CD4-positive, alpha-beta T cell (primary cell): ENCODE measurements at regions of chr12 and their contacts with region 1.

Region 1: DNA sequence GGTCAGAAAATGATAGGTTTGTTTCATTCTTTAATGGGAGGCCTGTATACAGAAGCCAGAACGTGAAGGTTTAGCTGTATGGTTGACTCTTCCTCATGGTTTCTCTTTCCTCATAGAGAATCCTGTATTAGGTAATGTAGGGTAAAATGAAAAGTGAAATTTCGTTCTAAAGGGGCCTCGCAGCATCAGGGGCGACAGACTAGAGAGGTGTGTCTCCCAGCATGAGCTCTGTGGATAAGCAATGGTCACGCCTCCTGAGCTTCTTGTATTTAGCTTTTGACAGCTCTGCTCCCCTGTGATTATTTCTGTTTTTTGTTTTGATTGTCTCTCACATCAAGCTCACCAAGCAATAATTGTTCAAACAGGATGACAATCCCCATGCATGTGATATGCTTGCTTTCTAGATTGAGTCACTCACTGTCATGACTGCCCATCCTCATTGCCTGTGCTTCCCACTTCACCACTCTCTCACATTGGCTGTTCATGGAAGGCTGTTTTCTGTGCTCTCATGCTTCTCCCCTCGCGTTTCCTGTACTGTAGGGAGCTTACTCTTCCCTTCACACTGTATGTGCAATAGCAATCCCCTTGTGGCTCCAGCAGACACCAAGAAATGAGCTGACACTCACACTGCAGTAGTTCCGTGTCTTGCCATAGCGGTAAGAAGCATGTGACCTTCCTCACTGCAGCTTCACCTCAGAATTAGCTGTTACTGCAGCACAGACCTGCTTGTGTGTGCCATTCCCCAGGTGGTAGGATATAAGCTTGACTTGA is 44.0 kb downstream of the RAD52 start:
- DNase-seq: peak in 3 of 14 experiments; percentile 25 to 40 (median 30)
- ATAC-seq: peak; percentile 75
- H3K4me3 ChIP-seq: no peak overlapping the region
- H3K4me3 Mint-ChIP-seq: peak overlapping the region; percentile 12
- H3K27ac ChIP-seq: no peak overlapping the region
- H3K27ac Mint-ChIP-seq: peak overlapping the region; percentile 51
- H3K4me1 ChIP-seq: no peaks in the 10 kb centered on the region
- H3K4me1 Mint-ChIP-seq: peaks cover 43% of the 10 kb centered on the region
- H3K27me3 ChIP-seq: no peaks in the 10 kb centered on the region
- H3K27me3 Mint-ChIP-seq: no peaks in the 10 kb centered on the region
- CTCF ChIP-seq: no peak

Region 2: DNA sequence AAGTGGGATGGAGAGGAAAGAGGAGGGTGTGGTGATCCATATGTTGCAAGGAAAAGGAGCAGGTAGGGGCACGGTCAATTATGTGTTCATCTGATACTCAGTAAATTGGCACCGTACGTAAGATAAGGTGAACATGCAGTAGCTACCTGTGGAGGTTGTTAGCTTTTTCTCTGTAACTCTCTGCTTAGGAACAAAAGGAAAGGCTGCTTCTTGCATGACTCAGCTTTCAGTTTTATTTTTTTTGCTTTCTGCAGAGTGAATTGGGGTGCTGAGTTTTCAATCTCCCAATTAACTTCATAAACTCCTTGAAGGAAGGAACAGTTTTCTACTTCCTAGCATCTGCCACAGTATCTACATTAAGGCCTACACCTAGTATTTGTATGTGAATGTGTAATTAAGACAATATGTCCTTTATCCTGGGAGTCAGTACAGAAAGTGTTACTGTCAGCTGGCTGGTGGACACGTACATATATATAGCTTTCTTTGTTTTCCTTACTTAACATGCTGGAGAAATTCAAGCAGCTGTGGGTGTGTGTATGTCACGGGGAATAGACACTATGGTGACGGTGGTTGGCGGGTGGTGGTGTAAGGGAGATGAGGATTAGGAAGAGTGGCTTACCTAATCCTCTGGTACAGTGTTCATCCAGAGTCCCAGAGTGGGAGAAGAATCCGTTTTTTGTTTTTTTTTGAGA is 193.1 kb before region 1 on chr12:
- CTCF ChIA-PET with region 1: no interaction called
- POLR2A ChIA-PET with region 1: no interaction called
- intact Hi-C with region 1: no loop called
- DNase-seq: no peak
- ATAC-seq: no peak
- H3K4me3 ChIP-seq: no peak overlapping the region
- H3K4me3 Mint-ChIP-seq: no peak overlapping the region
- H3K27ac ChIP-seq: no peak overlapping the region
- H3K27ac Mint-ChIP-seq: no peak overlapping the region
- H3K4me1 ChIP-seq: no peaks in the 10 kb centered on the region
- H3K4me1 Mint-ChIP-seq: peaks cover 10% of the 10 kb centered on the region
- H3K27me3 ChIP-seq: no peaks in the 10 kb centered on the region
- H3K27me3 Mint-ChIP-seq: no peaks in the 10 kb centered on the region
- CTCF ChIP-seq: no peak

Region 3: DNA sequence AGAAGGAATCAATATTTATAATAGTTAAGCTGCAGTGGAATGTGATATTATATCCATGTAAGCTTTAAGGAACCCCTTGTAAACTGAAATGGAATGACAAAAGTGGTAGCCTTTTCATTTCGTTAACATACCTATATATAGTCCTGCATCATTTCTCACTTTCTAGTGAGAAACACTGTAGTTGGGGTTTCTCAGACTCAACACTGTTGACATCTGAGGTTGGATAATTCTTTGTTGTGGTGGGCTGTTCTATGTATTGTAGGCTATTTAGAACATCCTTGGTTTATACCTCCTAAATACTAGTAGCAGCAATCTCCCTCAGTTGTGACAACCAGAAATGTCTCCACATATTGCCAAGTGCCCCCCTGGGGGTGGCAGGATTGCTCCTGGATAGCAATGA is 35.1 kb before region 1 on chr12:
- CTCF ChIA-PET with region 1: interaction called, 3 read pairs
- POLR2A ChIA-PET with region 1: no interaction called
- intact Hi-C with region 1: loop called in 1 of 2 experiments (anchors 1 kb)
- DNase-seq: peak in 3 of 14 experiments; percentile 30 to 62 (median 31)
- ATAC-seq: peak; percentile 93
- H3K4me3 ChIP-seq: no peak overlapping the region
- H3K4me3 Mint-ChIP-seq: no peak overlapping the region
- H3K27ac ChIP-seq: no peak overlapping the region
- H3K27ac Mint-ChIP-seq: peak overlapping the region; percentile 37
- H3K4me1 ChIP-seq: no peaks in the 10 kb centered on the region
- H3K4me1 Mint-ChIP-seq: peaks cover 34% of the 10 kb centered on the region
- H3K27me3 ChIP-seq: no peaks in the 10 kb centered on the region
- H3K27me3 Mint-ChIP-seq: no peaks in the 10 kb centered on the region
- CTCF ChIP-seq: no peak

Region 4: GRCh38 chr12:1162081-1162760 is 256.8 kb after region 1 on chr12:
- CTCF ChIA-PET with region 1: no interaction called
- POLR2A ChIA-PET with region 1: no interaction called
- intact Hi-C with region 1: no loop called
- DNase-seq: no peak
- ATAC-seq: no peak
- H3K4me3 ChIP-seq: no peak overlapping the region
- H3K4me3 Mint-ChIP-seq: no peak overlapping the region
- H3K27ac ChIP-seq: no peak overlapping the region
- H3K27ac Mint-ChIP-seq: no peak overlapping the region
- H3K4me1 ChIP-seq: no peaks in the 10 kb centered on the region
- H3K4me1 Mint-ChIP-seq: peaks cover 8% of the 10 kb centered on the region
- H3K27me3 ChIP-seq: no peaks in the 10 kb centered on the region
- H3K27me3 Mint-ChIP-seq: no peaks in the 10 kb centered on the region
- CTCF ChIP-seq: no peak

Region 5: DNA sequence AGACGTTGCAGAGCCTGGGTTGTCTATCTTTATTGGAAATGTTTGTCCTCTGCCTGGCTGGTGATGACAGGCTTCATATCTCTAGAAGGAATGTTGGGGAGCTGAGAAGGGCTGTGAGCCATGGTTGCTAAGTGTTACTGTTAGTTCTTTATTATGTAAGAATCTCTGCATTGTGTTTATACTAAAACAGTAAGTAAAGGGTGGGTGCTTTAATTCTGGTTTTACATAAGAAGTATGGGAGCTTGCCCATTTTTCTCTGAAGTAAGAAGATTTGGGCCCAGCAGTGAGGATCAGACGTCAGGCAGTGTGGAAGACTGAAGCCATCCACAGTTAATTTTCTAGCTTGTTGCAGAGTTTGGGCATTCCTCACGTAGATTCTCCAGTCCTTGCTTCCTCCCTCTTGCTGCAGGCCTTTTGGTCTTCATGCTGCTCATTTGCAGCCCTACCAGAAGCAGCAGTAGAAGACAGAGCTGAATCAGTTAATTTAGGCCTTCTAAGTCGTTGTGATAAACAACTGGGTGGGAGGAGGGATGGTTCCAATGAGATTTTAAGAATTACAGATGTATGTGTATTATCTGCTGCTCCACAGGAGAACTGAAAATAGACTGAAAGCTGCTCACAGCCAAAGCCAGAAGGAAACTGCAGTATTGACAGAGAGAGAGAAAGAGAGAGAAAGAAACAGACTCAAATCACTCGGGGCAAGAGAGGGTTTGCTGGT is 745.0 kb after region 1 on chr12:
- CTCF ChIA-PET with region 1: no interaction called
- POLR2A ChIA-PET with region 1: no interaction called
- intact Hi-C with region 1: no loop called
- DNase-seq: no peak
- ATAC-seq: no peak
- H3K4me3 ChIP-seq: no peak overlapping the region
- H3K4me3 Mint-ChIP-seq: no peak overlapping the region
- H3K27ac ChIP-seq: no peak overlapping the region
- H3K27ac Mint-ChIP-seq: no peak overlapping the region
- H3K4me1 ChIP-seq: peaks cover 7% of the 10 kb centered on the region
- H3K4me1 Mint-ChIP-seq: no peaks in the 10 kb centered on the region
- H3K27me3 ChIP-seq: no peaks in the 10 kb centered on the region
- H3K27me3 Mint-ChIP-seq: peaks cover 4% of the 10 kb centered on the region
- CTCF ChIP-seq: no peak